CD4-positive, alpha-beta T cell (primary cell): ENCODE measurements at regions of chr6 and their contacts with region 1.

Region 1: GRCh38 chr6:158869826-158870648 is 50.9 kb upstream of the EZR start:
- DNase-seq: peak in 10 of 14 experiments; percentile 31 to 98 (median 96)
- ATAC-seq: peak; percentile 77
- H3K4me3 ChIP-seq: peak overlapping the region; percentile 65
- H3K4me3 Mint-ChIP-seq: peak overlapping the region; percentile 85
- H3K27ac ChIP-seq: peak overlapping the region; percentile 98 to 100
- H3K27ac Mint-ChIP-seq: peak overlapping the region; percentile 99
- H3K4me1 ChIP-seq: peaks cover 21% of the 10 kb centered on the region
- H3K4me1 Mint-ChIP-seq: peaks cover 37% of the 10 kb centered on the region
- H3K27me3 ChIP-seq: no peaks in the 10 kb centered on the region
- H3K27me3 Mint-ChIP-seq: no peaks in the 10 kb centered on the region
- CTCF ChIP-seq: no peak

Region 2: GRCh38 chr6:158793432-158793831 is 76.6 kb before region 1 on chr6:
- CTCF ChIA-PET with region 1: interaction called, 6 read pairs
- POLR2A ChIA-PET with region 1: interaction called, 37 read pairs
- intact Hi-C with region 1: no loop called
- DNase-seq: peak in 5 of 14 experiments; percentile 3 to 69 (median 65)
- ATAC-seq: peak; percentile 28
- H3K4me3 ChIP-seq: no peak overlapping the region
- H3K4me3 Mint-ChIP-seq: peak overlapping the region; percentile 42
- H3K27ac ChIP-seq: no peak overlapping the region
- H3K27ac Mint-ChIP-seq: peak overlapping the region; percentile 66
- H3K4me1 ChIP-seq: peaks cover 76% of the 10 kb centered on the region
- H3K4me1 Mint-ChIP-seq: peaks cover 88% of the 10 kb centered on the region
- H3K27me3 ChIP-seq: no peaks in the 10 kb centered on the region
- H3K27me3 Mint-ChIP-seq: no peaks in the 10 kb centered on the region
- CTCF ChIP-seq: peak; percentile 51

Region 3: DNA sequence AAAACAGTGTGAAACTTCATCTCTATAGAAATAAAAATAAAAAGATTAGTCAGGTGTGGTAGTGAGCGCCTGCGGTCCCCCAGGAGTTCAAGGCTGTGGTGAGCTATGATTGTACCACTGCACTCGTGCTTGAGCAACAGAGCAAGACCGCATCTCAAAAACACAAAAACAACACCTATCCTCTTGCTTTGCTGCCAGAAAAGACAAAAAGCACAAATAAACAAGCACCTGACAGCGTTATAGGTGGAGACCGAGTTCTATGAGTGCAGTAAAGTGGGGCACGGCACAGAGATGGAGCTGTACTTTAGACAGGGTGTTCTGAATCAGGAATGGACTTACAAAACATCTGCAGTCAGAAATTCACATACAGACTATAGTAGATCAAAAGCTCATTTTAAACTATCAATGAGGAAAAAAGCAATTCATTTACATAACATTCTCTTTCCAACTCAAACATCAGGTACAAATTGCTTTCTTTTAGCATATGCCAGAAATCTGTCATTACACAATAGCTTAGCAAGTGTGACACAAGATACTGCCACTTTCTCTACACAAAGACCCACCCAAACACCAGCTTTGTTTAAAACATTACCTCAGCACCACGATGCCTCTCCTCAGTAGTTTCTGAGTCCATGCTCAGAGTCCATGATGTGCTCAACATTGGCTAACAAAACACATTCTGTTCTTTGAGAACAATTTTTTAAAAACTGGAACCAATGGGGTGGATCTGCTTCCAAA is 60.9 kb before region 1 on chr6:
- CTCF ChIA-PET with region 1: interaction called, 7 read pairs
- POLR2A ChIA-PET with region 1: interaction called, 71 read pairs
- intact Hi-C with region 1: no loop called
- DNase-seq: peak in 6 of 14 experiments; percentile 32 to 73 (median 50)
- ATAC-seq: peak; percentile 58
- H3K4me3 ChIP-seq: no peak overlapping the region
- H3K4me3 Mint-ChIP-seq: peak overlapping the region; percentile 60
- H3K27ac ChIP-seq: peak overlapping the region in 1 of 2 donors; percentile 43
- H3K27ac Mint-ChIP-seq: peak overlapping the region; percentile 82
- H3K4me1 ChIP-seq: peaks cover 79% of the 10 kb centered on the region
- H3K4me1 Mint-ChIP-seq: peaks cover 99% of the 10 kb centered on the region
- H3K27me3 ChIP-seq: no peaks in the 10 kb centered on the region
- H3K27me3 Mint-ChIP-seq: no peaks in the 10 kb centered on the region
- CTCF ChIP-seq: no peak

Region 4: GRCh38 chr6:158853072-158853871 is 16.8 kb before region 1 on chr6:
- CTCF ChIA-PET with region 1: interaction called, 16 read pairs
- POLR2A ChIA-PET with region 1: interaction called, 214 read pairs
- intact Hi-C with region 1: loop called (anchors 1 to 2 kb)
- DNase-seq: peak; percentile 73 to 97 (median 86)
- ATAC-seq: peak; percentile 70
- H3K4me3 ChIP-seq: peak overlapping the region; percentile 53
- H3K4me3 Mint-ChIP-seq: no peak overlapping the region
- H3K27ac ChIP-seq: peak overlapping the region; percentile 86 to 97
- H3K27ac Mint-ChIP-seq: no peak overlapping the region
- H3K4me1 ChIP-seq: peaks cover 67% of the 10 kb centered on the region
- H3K4me1 Mint-ChIP-seq: peaks cover 27% of the 10 kb centered on the region
- H3K27me3 ChIP-seq: no peaks in the 10 kb centered on the region
- H3K27me3 Mint-ChIP-seq: no peaks in the 10 kb centered on the region
- CTCF ChIP-seq: no peak

Region 5: GRCh38 chr6:158910484-158911348 is 40.7 kb after region 1 on chr6:
- CTCF ChIA-PET with region 1: no interaction called
- POLR2A ChIA-PET with region 1: interaction called, 38 read pairs
- intact Hi-C with region 1: loop called (anchors 2 to 5 kb)
- DNase-seq: peak in 4 of 14 experiments; percentile 17 to 53 (median 32)
- ATAC-seq: peak; percentile 45
- H3K4me3 ChIP-seq: peak overlapping the region; percentile 21
- H3K4me3 Mint-ChIP-seq: peak overlapping the region; percentile 30
- H3K27ac ChIP-seq: no peak overlapping the region
- H3K27ac Mint-ChIP-seq: peak overlapping the region; percentile 52
- H3K4me1 ChIP-seq: peaks cover 33% of the 10 kb centered on the region
- H3K4me1 Mint-ChIP-seq: peaks cover 46% of the 10 kb centered on the region
- H3K27me3 ChIP-seq: no peaks in the 10 kb centered on the region
- H3K27me3 Mint-ChIP-seq: no peaks in the 10 kb centered on the region
- CTCF ChIP-seq: no peak

Region 6: DNA sequence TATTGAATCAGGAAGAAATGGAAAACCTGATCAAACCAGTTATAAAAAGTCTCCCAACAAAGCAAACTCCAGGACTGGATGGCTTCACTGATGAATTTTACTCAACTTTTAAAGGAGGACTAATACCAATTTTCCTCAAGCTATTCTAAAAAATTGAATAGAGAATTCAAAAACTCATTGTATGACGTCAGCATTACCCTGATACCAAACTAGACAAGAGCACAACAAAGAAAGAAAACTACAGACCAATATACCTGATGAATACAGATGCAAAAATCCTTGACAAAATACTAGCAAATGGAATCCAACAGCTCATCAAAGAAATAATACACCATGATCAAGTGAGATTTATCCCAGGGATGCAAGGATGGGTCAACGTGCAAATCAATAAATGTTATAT is 472.1 kb after region 1 on chr6:
- CTCF ChIA-PET with region 1: no interaction called
- POLR2A ChIA-PET with region 1: no interaction called
- intact Hi-C with region 1: no loop called
- DNase-seq: no peak
- ATAC-seq: no peak
- H3K4me3 ChIP-seq: no peak overlapping the region
- H3K4me3 Mint-ChIP-seq: no peak overlapping the region
- H3K27ac ChIP-seq: no peak overlapping the region
- H3K27ac Mint-ChIP-seq: no peak overlapping the region
- H3K4me1 ChIP-seq: no peaks in the 10 kb centered on the region
- H3K4me1 Mint-ChIP-seq: no peaks in the 10 kb centered on the region
- H3K27me3 ChIP-seq: no peaks in the 10 kb centered on the region
- H3K27me3 Mint-ChIP-seq: peaks cover 41% of the 10 kb centered on the region
- CTCF ChIP-seq: no peak